ENCODE measurements at regions of chr9 and their contacts with region 1.

Region 1: DNA sequence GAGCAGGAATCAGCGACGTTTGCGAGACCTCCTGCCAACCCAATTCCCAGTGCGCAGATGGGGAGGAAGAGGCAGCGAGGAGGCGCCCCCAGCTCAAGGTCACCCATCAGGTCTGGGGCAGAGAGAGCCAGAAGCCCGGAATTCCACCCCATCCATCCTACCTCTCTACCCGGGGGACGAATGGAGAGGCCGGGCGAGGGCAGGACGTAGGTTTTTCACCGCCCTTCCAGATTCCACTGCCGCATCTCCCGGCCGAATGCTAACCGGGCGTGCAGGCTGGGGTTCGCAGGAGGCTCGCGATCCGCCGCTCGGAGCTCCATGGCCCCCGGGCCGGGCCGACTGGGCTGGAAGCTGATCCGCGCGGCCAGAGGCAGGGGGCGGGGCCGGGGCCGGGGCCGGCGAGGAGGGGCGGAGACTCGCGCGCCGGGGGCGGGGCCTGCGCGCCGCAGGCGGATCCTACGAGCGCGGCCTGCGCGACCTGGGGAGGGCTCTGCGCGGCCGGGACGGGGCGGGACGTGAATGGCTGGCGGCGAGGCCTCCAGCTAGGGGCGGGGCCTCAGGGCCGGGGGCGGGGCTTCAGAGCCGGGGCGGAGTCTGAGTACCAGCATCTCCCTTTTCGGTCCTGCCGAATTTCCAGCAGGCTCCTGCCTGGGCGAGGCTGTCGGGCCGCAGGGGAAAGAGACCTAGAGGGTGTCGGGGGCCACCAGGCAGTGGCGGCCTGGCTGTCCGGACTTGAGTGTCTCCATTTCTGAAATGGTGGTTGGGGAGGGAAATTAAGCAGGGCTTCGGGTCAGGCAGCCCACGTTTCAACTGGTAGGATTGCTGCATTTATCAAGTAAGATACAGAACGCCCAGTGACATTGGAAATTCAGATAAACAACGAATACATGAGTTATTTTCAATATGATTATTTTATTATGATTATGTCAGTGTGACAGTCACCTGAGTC is at the start of gene ST6GALNAC4:
- H3K4me3 ChIP-seq: peak within 1 kb of the TSS; percentile 43
- H3K27ac ChIP-seq: no peak within 1 kb of the TSS
- H3K4me1 ChIP-seq: peaks cover 3% of the 10 kb centered on the region; the same call in 1 of the 2 replicates
- CTCF ChIP-seq: no peak

Region 2: DNA sequence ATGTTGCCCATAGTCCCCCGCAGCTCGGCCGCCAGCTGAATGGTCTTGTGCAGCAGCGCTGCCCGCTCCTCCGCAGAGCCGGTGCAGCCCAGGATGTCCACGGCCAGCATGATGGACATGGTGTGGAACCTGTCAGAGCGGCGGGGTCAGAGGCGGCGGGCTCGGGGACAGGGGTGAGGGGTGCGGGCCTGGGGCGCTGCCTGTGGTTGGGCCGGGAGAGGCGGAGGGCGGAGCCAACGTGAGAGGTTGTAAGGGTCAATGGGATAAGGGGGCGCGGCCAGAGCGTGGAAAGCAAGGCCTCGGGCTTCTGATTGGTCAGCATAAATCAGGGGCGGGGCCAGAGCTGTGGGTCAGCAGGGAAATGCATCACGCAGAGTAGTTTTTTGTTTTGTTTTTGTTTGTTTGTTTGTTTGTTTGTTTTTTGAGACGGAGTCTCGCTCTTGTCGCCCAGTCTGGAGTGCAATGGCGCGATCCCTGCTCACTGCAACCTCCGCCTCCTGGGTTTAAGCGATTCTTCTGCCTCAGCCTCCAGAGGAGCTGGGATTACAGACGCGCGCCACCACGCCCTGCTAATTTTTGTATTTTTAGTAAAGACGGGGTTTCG is 175.0 kb before region 1 on chr9:
- CTCF ChIA-PET with region 1: interaction called, 14 read pairs
- POLR2A ChIA-PET with region 1: interaction called, 3 read pairs
- H3K4me3 ChIP-seq: no peak overlapping the region
- H3K27ac ChIP-seq: no peak overlapping the region
- H3K4me1 ChIP-seq: no peaks in the 10 kb centered on the region
- CTCF ChIP-seq: no peak